Mammary epithelial cell (primary cell): ENCODE measurements at regions of chr6 and their contacts with region 1.

Region 1: GRCh38 chr6:140537819-140538705 is 1163.6 kb upstream of the CITED2 start:
- DNase-seq: peak; percentile 72
- H3K4me3 ChIP-seq: no peak overlapping the region
- H3K27ac ChIP-seq: peak overlapping the region; percentile 8
- H3K4me1 ChIP-seq: peaks cover 26% of the 10 kb centered on the region
- H3K27me3 ChIP-seq: no peaks in the 10 kb centered on the region
- CTCF ChIP-seq: no peak

Region 2: DNA sequence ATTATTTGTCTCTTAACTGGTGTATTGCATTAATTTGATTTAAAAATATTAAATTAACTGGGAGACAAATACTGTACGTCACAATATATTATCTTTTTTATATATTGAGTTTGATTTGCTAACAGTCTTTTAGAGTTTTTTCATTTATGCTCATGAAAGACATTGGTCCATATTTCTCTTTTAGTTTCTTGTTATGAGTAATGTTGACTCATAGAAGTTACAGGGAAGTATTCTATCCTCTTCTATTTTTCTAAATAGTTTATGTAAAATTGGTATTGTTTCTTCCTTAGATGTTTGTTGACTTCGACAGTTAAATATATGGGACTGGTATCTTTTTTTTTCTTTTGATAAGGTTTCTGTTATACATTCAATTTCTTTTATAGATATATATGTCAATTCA is 48.0 kb before region 1 on chr6:
- CTCF ChIA-PET with region 1: no interaction called
- dilution Hi-C with region 1: no loop called
- in situ Hi-C with region 1: no loop called
- intact Hi-C with region 1: loop called (anchors 2 kb)
- DNase-seq: peak; percentile 5
- H3K4me3 ChIP-seq: no peak overlapping the region
- H3K27ac ChIP-seq: no peak overlapping the region
- H3K4me1 ChIP-seq: peaks cover 16% of the 10 kb centered on the region
- H3K27me3 ChIP-seq: no peaks in the 10 kb centered on the region
- CTCF ChIP-seq: no peak

Region 3: GRCh38 chr6:140586426-140587061 is 48.5 kb after region 1 on chr6:
- CTCF ChIA-PET with region 1: no interaction called
- dilution Hi-C with region 1: no loop called
- in situ Hi-C with region 1: no loop called
- intact Hi-C with region 1: no loop called
- DNase-seq: no peak
- H3K4me3 ChIP-seq: no peak overlapping the region
- H3K27ac ChIP-seq: no peak overlapping the region
- H3K4me1 ChIP-seq: no peaks in the 10 kb centered on the region
- H3K27me3 ChIP-seq: no peaks in the 10 kb centered on the region
- CTCF ChIP-seq: no peak